Esophagus muscularis mucosa (tissue), 4 donors: ENCODE measurements at regions of chr1 and their contacts with region 1.

Region 1: GRCh38 chr1:154961497-154962262 is at the start of gene PYGO2:
- DNase-seq: peak; percentile 95
- H3K4me3 ChIP-seq: peak within 1 kb of the TSS; percentile 80 to 96 (median 90)
- H3K27ac ChIP-seq: peak within 1 kb of the TSS; percentile 95 to 99 (median 98)
- H3K4me1 ChIP-seq: peaks cover 29 to 66% (median 54%) of the 10 kb centered on the region in 4 donors
- H3K27me3 ChIP-seq: no peaks in the 10 kb centered on the region
- CTCF ChIP-seq: peak; percentile 66 to 87 (median 72)
- EP300 ChIP-seq: no peak
- POLR2A ChIP-seq: peak; percentile 83
- total RNA-seq, gene PYGO2: 20.2 to 35.3 (median 27.7) TPM

Region 2: GRCh38 chr1:154747740-154748404 is 213.8 kb before region 1 on chr1:
- intact Hi-C with region 1: no loop called
- DNase-seq: peak; percentile 95
- H3K4me3 ChIP-seq: no peak overlapping the region
- H3K27ac ChIP-seq: peak overlapping the region in 3 of 4 donors; percentile 37 to 41 (median 40)
- H3K4me1 ChIP-seq: peaks cover 5 to 56% (median 48%) of the 10 kb centered on the region in 4 donors
- H3K27me3 ChIP-seq: no peaks in the 10 kb centered on the region
- CTCF ChIP-seq: no peak
- EP300 ChIP-seq: no peak
- POLR2A ChIP-seq: no peak

Region 3: GRCh38 chr1:154998818-154999570 is 37.3 kb after region 1 on chr1:
- intact Hi-C with region 1: loop called (anchors 5 kb)
- DNase-seq: no peak
- H3K4me3 ChIP-seq: peak overlapping the region; percentile 80 to 97 (median 92)
- H3K27ac ChIP-seq: peak overlapping the region; percentile 97 to 99 (median 98)
- H3K4me1 ChIP-seq: peaks cover 17 to 41% (median 36%) of the 10 kb centered on the region in 4 donors
- H3K27me3 ChIP-seq: no peaks in the 10 kb centered on the region
- CTCF ChIP-seq: peak; percentile 67 to 85 (median 78)
- EP300 ChIP-seq: no peak
- POLR2A ChIP-seq: no peak

Region 4: DNA sequence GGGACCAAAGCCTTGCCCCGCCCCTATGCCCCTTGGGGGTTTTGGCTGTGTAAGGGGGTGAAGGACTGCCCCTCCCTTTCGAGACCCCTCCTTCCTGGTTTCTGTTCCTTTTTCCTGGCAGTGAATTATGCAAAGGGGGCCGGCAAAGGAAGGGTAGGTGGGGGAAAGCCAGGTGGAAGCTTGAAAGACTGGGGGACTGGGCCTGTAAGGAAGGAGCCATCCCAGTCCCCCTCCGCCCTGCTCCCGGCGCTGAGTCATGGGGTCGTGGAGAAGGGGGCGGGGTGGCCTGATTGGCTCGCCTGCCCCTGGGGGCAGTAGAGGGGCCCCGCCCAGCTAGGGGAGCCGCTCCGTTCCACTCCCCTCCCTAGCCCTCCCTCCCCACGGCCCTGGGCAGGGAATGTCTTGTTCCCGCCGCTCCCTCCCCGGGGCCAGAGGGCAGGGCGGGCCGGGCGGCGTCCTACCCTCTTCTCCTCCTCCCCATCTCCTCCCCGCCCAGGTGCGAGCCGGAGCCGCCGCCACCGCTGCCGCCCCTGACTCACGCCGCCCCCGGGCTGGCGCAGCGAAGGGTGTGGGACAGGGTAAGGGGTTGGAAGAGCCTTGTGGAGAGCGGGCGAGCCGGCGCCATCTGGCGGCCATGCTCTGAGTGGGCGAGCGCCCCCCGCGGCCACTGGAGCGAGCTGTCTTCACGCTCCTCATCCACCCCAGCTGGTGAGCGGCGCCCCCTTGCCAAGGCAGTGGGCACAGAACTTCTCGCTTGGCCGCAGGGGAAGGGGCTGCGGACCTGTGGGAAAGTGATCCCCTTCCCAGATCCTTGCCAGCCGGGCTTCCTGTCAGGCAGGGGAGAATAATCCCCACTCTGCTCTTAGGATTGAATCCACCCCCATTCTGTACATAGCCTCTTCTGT is 55.6 kb after region 1 on chr1:
- intact Hi-C with region 1: loop called (anchors 5 kb)
- DNase-seq: peak; percentile 97
- H3K4me3 ChIP-seq: peak overlapping the region; percentile 54 to 66 (median 58)
- H3K27ac ChIP-seq: peak overlapping the region; percentile 86 to 92 (median 90)
- H3K4me1 ChIP-seq: peaks cover 30 to 54% (median 41%) of the 10 kb centered on the region in 4 donors
- H3K27me3 ChIP-seq: no peaks in the 10 kb centered on the region
- CTCF ChIP-seq: peak in 2 of 3 experiments; percentile 98 to 99
- EP300 ChIP-seq: no peak
- POLR2A ChIP-seq: no peak

Region 5: GRCh38 chr1:155063550-155064110 is 102.0 kb after region 1 on chr1 and contains the start of gene EFNA4:
- intact Hi-C with region 1: loop called (anchors 5 kb)
- DNase-seq: peak; percentile 97
- H3K4me3 ChIP-seq: peak within 1 kb of the TSS; percentile 65 to 89 (median 74)
- H3K27ac ChIP-seq: peak within 1 kb of the TSS; percentile 69 to 84 (median 80)
- H3K4me1 ChIP-seq: peaks cover 37 to 46% (median 42%) of the 10 kb centered on the region in 4 donors
- H3K27me3 ChIP-seq: peaks cover 0 to 7% (median 0%) of the 10 kb centered on the region in 4 donors
- CTCF ChIP-seq: peak in 1 of 3 experiments; percentile 1
- EP300 ChIP-seq: no peak
- POLR2A ChIP-seq: no peak
- total RNA-seq, gene EFNA4: 0.83 to 4.5 (median 3.2) TPM